Mammary epithelial cell (primary cell): ENCODE measurements at regions of chr3 and their contacts with region 1.

Region 1: DNA sequence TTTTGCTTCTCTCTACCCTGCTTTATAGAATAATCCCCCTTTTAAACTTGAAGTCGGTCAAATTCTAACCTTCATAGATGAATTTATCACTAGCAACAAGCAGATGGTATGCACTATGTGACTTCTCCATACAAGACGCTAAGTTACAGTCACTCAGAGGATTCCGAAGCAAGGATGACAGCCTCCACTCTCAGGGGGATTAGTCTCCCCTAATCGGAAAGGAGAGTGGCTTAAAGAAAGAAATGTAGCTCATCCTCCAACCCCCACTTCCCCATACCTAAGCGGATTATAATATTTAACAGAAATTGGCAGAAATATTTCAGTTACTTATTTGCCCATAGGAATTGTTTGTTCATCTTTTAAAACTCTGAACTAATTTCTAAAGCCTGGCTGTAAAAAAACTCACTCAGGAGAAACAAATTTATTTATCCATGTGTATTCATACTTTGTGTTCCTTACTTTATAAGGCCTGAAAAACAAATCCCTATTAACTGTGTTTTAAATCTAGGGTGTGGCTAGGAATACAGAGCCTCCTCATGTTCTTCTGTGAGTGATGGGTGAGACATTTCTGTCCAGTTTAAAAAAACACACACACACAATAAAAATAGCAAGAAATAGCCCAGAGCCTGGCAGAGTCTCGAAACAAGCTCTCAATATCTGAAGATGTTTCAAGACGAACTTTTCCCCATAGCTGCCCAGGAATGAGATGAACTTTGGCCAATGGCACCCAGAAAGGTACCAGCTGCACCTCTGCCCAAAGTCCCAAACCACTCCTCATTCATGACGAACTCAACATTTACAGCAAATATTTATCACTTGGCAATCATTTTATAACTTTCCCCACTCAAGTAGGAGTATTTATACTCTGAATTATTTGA is 18.7 kb downstream of the SIAH2 start:
- DNase-seq: peak; percentile 46
- H3K4me3 ChIP-seq: no peak overlapping the region
- H3K27ac ChIP-seq: peak overlapping the region; percentile 84
- H3K4me1 ChIP-seq: peaks cover 25% of the 10 kb centered on the region
- H3K27me3 ChIP-seq: no peaks in the 10 kb centered on the region
- CTCF ChIP-seq: no peak

Region 2: DNA sequence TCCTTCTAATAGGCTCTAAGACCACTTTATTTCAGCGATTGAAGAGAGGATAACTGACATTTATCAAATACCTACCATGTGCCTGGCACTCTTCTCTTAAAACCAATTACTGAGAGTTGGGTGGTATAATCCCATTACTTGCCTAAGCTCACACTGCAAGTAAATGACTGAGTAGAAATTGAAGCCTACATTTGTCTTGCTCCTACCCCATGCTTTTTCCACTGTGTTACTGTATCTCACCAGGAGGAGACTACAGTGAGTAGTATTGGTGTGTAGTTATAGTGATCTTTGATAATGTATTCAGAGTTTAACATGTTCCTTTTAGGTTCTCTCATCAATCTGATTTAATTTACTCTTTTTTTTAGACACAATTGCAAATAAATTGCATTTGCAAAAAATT is 177.0 kb before region 1 on chr3:
- CTCF ChIA-PET with region 1: no interaction called
- dilution Hi-C with region 1: no loop called
- in situ Hi-C with region 1: no loop called
- intact Hi-C with region 1: no loop called
- DNase-seq: no peak
- H3K4me3 ChIP-seq: no peak overlapping the region
- H3K27ac ChIP-seq: no peak overlapping the region
- H3K4me1 ChIP-seq: no peaks in the 10 kb centered on the region
- H3K27me3 ChIP-seq: no peaks in the 10 kb centered on the region
- CTCF ChIP-seq: no peak

Region 3: DNA sequence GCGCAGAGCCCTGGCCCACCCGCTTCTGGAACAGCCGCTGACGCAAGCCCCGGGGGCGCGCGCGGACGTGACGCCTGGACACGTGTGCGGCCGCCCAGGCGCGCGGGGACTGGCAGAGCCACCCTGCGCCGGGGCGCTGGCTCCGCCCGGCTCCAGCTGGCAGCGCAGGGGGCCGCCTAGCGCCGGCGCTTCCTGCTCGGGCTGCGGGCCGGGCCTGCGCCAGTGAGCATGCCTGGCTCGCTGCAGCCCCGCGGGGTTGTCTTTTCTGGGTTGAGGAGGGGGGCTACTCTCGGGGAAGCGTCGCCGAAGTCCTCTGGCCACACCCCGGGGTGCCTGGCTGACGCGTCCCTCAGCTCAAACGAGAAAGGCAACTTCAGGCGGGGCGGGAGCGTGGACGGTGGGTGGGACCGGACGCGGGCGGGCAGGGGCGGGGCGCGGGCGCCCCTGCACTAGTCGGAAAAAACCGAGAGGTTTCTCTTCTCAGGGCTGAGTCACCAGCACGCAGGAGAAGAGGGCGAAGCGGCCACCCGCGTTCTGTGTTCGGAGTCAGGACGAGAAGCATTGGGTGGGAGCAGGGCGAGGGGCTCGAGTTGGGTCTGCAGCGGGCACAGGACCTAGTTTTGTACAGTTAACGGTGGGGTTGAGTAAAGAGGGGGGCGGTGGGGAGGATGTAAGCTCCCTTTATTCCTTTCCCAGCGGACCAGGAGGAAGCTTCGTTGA is 19.0 kb after region 1 on chr3 and contains the start of gene SIAH2:
- CTCF ChIA-PET with region 1: interaction called, 6 read pairs
- dilution Hi-C with region 1: no loop called
- in situ Hi-C with region 1: no loop called
- intact Hi-C with region 1: loop called (anchors 2 kb)
- DNase-seq: peak; percentile 95
- H3K4me3 ChIP-seq: peak within 1 kb of the TSS; percentile 59 to 96 (median 87)
- H3K27ac ChIP-seq: peak within 1 kb of the TSS; percentile 75
- H3K4me1 ChIP-seq: peaks cover 30% of the 10 kb centered on the region
- H3K27me3 ChIP-seq: no peaks in the 10 kb centered on the region
- CTCF ChIP-seq: no peak
- total RNA-seq, gene SIAH2: 23.7 to 30.5 TPM